IMR-90 (cell line): ENCODE measurements at regions of chr12 and their contacts with region 1.

Region 1: DNA sequence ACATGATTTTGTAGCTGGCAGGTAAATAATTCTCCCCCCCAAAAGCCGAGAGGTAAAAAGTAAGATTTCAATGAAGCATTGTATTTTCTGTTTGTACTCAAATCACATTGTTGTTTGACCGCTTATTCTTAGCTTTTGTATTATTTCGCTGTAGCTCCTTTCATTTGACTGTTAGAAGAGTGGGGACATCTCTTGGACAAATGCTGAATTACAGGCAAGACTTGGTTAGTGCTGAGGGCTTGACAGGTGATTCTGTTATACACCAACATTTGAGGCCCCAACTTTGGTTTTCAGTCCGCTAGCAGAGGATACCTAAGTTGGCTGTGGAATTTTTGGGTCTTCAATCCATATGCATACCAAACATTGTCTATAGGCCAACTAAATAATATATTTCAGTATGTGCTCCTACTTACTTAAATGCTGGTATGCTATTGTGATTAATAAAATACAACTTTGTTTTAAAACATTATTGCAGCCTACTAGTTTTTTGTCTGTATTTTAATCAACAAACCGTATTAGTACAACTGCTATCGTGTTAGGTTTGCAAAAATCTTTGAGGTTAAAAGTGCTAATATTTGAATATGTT is 102.2 kb downstream of the ERC1 start:
- DNase-seq: peak; percentile 67
- ATAC-seq: peak; percentile 94
- H3K4me3 ChIP-seq: no peak overlapping the region
- H3K27ac ChIP-seq: no peak overlapping the region
- H3K4me1 ChIP-seq: peaks cover 4% of the 10 kb centered on the region; the same call in 1 of the 2 replicates
- H3K27me3 ChIP-seq: no peaks in the 10 kb centered on the region
- CTCF ChIP-seq: peak; percentile 76
- POLR2A ChIP-seq: no peak
- RAD21 ChIP-seq: peak; percentile 76

Region 2: GRCh38 chr12:569803-570434 is 523.3 kb before region 1 on chr12:
- CTCF ChIA-PET with region 1: interaction called, 6 read pairs
- POLR2A ChIA-PET with region 1: no interaction called
- dilution Hi-C with region 1: no loop called
- in situ Hi-C with region 1: loop called (anchors 10 kb)
- intact Hi-C with region 1: loop called (anchors 5 kb)
- DNase-seq: peak; percentile 70
- ATAC-seq: peak; percentile 81
- H3K4me3 ChIP-seq: peak overlapping the region; percentile 65
- H3K27ac ChIP-seq: peak overlapping the region; percentile 60
- H3K4me1 ChIP-seq: peaks cover 14% of the 10 kb centered on the region
- H3K27me3 ChIP-seq: peaks cover 15% of the 10 kb centered on the region
- CTCF ChIP-seq: peak; percentile 94
- POLR2A ChIP-seq: no peak; the same call in 1 of the 2 replicates
- RAD21 ChIP-seq: peak; percentile 92

Region 3: GRCh38 chr12:818733-819132 is 274.5 kb before region 1 on chr12:
- CTCF ChIA-PET with region 1: interaction called, 3 read pairs
- POLR2A ChIA-PET with region 1: no interaction called
- dilution Hi-C with region 1: no loop called
- in situ Hi-C with region 1: no loop called
- intact Hi-C with region 1: loop called (anchors 5 kb)
- DNase-seq: peak; percentile 13
- ATAC-seq: no peak; the same call in 1 of the 2 replicates
- H3K4me3 ChIP-seq: no peak overlapping the region
- H3K27ac ChIP-seq: no peak overlapping the region
- H3K4me1 ChIP-seq: no peaks in the 10 kb centered on the region
- H3K27me3 ChIP-seq: no peaks in the 10 kb centered on the region
- CTCF ChIP-seq: no peak; the same call in 1 of the 2 replicates
- POLR2A ChIP-seq: no peak
- RAD21 ChIP-seq: no peak

Region 4: GRCh38 chr12:949453-950191 is 143.6 kb before region 1 on chr12 and contains the start of gene RAD52:
- CTCF ChIA-PET with region 1: interaction called, 7 read pairs
- POLR2A ChIA-PET with region 1: no interaction called
- dilution Hi-C with region 1: no loop called
- in situ Hi-C with region 1: no loop called
- intact Hi-C with region 1: loop called (anchors 10 kb)
- DNase-seq: peak; percentile 99
- ATAC-seq: peak; percentile 89
- H3K4me3 ChIP-seq: peak within 1 kb of the TSS; percentile 72
- H3K27ac ChIP-seq: peak within 1 kb of the TSS; percentile 86
- H3K4me1 ChIP-seq: peaks cover 4% of the 10 kb centered on the region
- H3K27me3 ChIP-seq: no peaks in the 10 kb centered on the region
- CTCF ChIP-seq: peak; percentile 97
- POLR2A ChIP-seq: peak; percentile 78; the same call in 1 of the 2 replicates
- RAD21 ChIP-seq: peak; percentile 83
- total RNA-seq, gene RAD52: 9.7 and 11.3 TPM in 2 replicates

Region 5: DNA sequence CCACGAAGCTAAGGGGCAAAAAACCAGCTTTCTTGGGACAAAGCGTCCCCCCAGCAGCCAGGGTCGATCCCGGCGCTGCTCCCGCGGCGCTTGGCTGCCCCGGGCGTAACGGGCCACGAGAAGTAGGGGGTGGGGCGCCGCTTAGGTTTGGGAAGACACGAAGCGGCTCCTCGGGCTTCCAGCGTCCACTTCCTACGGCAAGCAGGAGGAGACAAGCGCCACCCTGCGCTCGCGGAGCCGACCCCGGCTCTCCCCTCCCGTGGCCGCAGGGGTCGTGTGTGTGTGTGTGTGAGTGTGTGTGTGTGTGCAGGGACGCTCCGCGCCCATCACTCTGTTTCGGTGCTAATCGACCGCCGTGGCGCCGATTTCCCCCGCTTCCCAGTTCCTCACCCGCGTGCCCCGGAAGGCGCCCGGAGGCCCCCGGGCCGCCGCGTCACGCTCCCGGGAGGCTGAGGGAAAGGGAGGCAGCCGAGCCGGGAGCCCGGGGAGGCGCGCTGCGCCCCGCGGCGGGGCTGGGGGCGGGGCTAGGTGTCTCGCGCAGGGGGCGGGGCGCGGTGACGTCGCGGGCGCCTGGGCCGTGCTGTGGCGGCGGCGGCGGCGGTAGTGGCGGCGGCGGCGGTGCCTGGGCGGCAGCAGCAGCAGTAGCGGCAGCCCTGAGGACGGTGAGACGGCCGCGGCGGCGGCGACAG is 102.5 kb before region 1 on chr12 and contains the start of gene ERC1:
- CTCF ChIA-PET with region 1: interaction called, 3 read pairs
- POLR2A ChIA-PET with region 1: no interaction called
- dilution Hi-C with region 1: no loop called
- in situ Hi-C with region 1: no loop called
- intact Hi-C with region 1: loop called (anchors 5 kb)
- DNase-seq: peak; percentile 87
- ATAC-seq: peak; percentile 91
- H3K4me3 ChIP-seq: peak within 1 kb of the TSS; percentile 77
- H3K27ac ChIP-seq: peak within 1 kb of the TSS; percentile 96
- H3K4me1 ChIP-seq: peaks cover 8% of the 10 kb centered on the region
- H3K27me3 ChIP-seq: no peaks in the 10 kb centered on the region
- CTCF ChIP-seq: 0 out of 2 replicates have a peak, but pooled peaks have one; percentile 1
- POLR2A ChIP-seq: peak; percentile 92
- RAD21 ChIP-seq: no peak
- total RNA-seq, gene ERC1: 25.6 and 27.8 TPM in 2 replicates

Region 6: DNA sequence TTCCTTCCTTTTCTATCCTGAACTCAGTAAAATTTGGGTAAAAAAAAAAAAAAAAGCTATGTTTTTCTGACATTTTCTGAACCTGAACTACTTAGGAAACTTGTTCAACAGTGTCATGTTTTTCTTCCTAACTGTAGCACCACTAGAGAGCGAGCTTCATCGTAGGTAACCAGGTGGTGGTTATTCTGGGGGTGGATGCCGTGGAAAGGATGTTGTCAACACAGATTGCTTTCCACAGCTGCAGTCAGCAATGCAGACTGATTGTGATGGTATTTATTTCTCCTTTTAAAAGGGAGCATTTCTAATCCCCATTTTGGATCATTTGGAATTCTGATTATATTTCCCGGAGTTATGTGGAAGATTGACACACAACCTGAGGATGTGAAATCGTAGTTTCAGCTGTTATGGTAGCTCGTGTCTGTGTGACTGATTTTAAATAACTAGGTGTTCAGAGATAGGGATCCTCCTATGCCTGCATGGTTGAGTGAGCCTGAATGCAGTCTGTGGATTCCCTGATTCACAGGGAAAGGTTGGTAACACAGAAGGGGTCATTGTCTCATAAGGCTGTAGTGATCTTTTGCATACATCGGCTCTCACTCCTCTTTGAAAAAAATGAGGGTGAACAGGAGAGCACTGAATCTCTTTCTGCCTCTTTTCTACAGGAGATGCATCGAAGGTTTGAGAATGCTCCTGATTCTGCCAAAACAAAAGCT is 11.0 kb after region 1 on chr12:
- CTCF ChIA-PET with region 1: interaction called, 10 read pairs
- POLR2A ChIA-PET with region 1: no interaction called
- dilution Hi-C with region 1: no loop called
- in situ Hi-C with region 1: no loop called
- intact Hi-C with region 1: no loop called
- DNase-seq: no peak
- ATAC-seq: no peak
- H3K4me3 ChIP-seq: no peak overlapping the region
- H3K27ac ChIP-seq: no peak overlapping the region
- H3K4me1 ChIP-seq: peaks cover 4% of the 10 kb centered on the region; the same call in 1 of the 2 replicates
- H3K27me3 ChIP-seq: no peaks in the 10 kb centered on the region
- CTCF ChIP-seq: no peak
- POLR2A ChIP-seq: no peak
- RAD21 ChIP-seq: no peak

Region 7: DNA sequence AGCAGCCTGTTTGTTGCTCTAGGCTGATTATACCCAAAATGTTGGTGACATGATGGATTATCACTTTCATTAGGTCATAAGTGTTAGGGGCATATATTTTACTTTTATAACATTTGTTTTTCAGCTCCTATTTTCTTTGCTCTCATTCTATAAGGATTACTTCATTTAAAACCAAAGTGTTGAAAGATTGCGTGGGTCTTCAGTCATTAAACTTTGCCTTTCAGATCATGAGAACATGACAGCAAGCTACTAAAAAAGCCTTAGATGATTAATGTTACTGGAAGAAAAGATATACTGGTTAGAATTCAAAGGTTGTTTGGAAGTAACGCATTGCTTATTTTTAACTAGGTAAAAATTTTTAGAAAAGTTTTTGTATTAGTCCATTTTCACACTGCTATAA is 54.6 kb after region 1 on chr12:
- CTCF ChIA-PET with region 1: no interaction called
- POLR2A ChIA-PET with region 1: no interaction called
- dilution Hi-C with region 1: no loop called
- in situ Hi-C with region 1: no loop called
- intact Hi-C with region 1: no loop called
- DNase-seq: no peak
- ATAC-seq: no peak
- H3K4me3 ChIP-seq: no peak overlapping the region
- H3K27ac ChIP-seq: no peak overlapping the region
- H3K4me1 ChIP-seq: no peaks in the 10 kb centered on the region
- H3K27me3 ChIP-seq: no peaks in the 10 kb centered on the region
- CTCF ChIP-seq: no peak
- POLR2A ChIP-seq: no peak
- RAD21 ChIP-seq: no peak

Region 8: DNA sequence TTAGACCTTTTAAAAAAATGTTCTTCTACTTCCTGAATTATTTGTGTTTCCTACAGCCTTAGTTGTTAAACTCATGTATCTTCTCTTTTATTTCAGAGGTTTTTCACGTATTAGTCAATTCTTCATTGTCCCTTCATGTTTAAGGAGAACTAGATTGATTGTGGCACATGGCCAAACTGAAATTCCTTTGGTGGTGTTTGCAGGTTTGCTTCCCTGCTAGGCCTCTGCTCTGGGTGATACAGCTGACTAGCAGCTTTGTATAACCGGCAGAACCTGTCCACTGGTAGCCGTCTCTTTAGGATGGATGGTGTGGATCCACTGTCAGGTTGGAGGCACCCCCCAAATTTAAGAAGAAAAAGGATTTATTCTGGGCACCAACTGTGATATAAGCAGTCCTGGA is 239.1 kb after region 1 on chr12:
- CTCF ChIA-PET with region 1: no interaction called
- POLR2A ChIA-PET with region 1: no interaction called
- dilution Hi-C with region 1: no loop called
- in situ Hi-C with region 1: no loop called
- intact Hi-C with region 1: no loop called
- DNase-seq: peak; percentile 12
- ATAC-seq: no peak
- H3K4me3 ChIP-seq: no peak overlapping the region
- H3K27ac ChIP-seq: no peak overlapping the region
- H3K4me1 ChIP-seq: no peaks in the 10 kb centered on the region
- H3K27me3 ChIP-seq: no peaks in the 10 kb centered on the region
- CTCF ChIP-seq: no peak
- POLR2A ChIP-seq: no peak
- RAD21 ChIP-seq: no peak